Right ventricle myocardium superior (tissue), 1 donor: ENCODE measurements at regions of chr7 and their contacts with region 1.

Region 1: DNA sequence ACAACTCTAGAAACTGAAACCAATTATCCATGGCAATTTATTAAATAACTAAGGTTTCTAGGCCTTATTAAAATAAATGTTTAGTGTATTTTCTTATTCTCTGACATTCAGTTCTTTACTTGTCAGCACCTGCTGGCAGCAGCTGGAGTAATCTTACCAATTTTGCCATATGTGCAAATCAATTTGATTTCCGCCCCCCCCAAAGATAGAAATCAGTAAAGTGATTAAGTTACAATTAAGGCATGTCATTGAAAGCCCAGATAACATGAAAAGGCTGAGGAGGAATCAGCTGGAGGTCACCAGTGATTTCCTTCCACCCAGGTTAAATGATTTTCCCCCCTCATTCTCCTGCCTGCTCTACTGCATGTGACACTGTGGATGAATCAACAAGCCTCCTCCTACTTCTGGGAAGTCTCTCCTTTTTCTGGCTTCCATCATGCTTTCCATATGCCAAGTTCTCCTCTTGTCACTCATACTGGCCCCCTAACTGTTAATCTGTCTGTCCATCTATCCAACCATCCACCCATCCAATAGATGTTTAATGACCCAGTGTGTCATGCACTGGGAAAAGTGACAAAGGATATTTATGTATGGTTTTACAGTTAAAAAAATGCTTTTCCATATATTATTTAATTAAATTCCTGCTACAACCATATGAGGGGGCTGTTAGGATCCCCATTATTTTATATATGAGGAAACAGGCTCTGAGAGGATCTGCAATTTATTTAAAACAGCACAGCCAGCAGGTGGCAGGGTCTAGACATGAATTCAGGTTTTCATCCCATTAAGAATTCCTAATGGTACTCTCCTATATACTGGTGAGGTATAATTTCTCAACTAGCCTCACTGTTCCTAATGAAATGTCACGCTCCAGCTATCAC is 116.5 kb downstream of the ATXN7L1 start:
- DNase-seq: peak; percentile 52
- ATAC-seq: peak; percentile 82

Region 2: GRCh38 chr7:105693576-105693975 is 66.3 kb before region 1 on chr7:
- intact Hi-C with region 1: no loop called
- DNase-seq: no peak
- ATAC-seq: no peak

Region 3: DNA sequence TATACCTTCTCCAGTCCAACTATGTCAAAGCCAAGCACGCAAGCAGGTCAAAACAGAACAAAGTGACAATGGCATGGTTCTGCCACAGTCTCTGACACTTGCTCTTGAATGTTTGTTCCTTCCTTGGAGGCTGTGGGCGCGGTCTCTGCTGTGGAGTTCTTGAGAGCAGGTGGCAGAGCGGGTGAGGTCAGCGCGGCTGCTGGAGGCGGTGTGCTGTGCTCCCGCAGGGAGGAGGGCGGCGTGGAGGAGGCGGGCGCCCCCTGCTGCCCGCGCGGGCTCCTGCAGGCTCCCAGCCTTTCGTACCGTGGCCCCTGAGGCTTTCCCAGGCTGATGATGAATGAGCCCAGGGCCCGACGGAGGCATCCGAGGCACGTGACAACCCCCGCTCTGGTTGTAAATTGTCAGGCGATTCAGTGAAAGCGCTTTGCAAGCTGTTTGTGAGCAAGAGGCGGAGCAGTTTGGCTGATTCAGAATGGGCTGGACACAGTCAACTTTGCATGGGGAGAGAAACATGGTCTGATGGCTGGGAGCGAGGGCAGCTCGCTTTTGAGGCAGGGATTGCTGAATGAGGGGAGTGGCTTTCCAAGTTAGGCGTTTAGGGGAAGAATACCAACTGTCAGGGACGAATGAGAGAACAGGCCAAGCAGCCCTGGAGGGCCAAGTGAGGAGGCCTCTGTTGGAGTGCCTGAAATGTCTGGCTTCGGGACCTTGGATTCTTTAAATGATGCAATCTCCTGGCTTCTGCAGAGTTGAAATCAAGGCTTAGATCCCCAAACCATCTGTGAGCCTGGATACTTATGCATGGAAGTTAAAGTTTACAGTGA is 249.7 kb after region 1 on chr7:
- intact Hi-C with region 1: loop called (anchors 10 kb)
- DNase-seq: peak; percentile 87
- ATAC-seq: peak; percentile 97

Region 4: GRCh38 chr7:106041140-106041717 is 281.3 kb after region 1 on chr7:
- intact Hi-C with region 1: loop called (anchors 2 kb)
- DNase-seq: no peak
- ATAC-seq: no peak

Region 5: GRCh38 chr7:106485031-106485551 is 725.2 kb after region 1 on chr7:
- intact Hi-C with region 1: no loop called
- DNase-seq: no peak
- ATAC-seq: peak; percentile 67